K562 (cell line): ENCODE measurements at regions of chr6 and their contacts with region 1.

Region 1: GRCh38 chr6:14734416-14735340 is 511.2 kb upstream of the JARID2 start:
- DNase-seq: peak; percentile 70 to 95 (median 78)
- ATAC-seq: peak; percentile 90
- H3K4me3 ChIP-seq: no peak overlapping the region
- H3K27ac ChIP-seq: peak overlapping the region; percentile 93
- H3K4me1 ChIP-seq: peaks cover 6 to 64% of the 10 kb centered on the region in 2 experiments; a peak in 4 of 5 replicates
- H3K27me3 ChIP-seq: no peaks in the 10 kb centered on the region
- CTCF ChIP-seq: no peak
- EP300 ChIP-seq: peak; percentile 99
- POLR2A ChIP-seq: no peak
- RAD21 ChIP-seq: peak; percentile 42 to 48

Region 2: GRCh38 chr6:14799928-14800327 is 65.2 kb after region 1 on chr6:
- CTCF ChIA-PET with region 1: no interaction called
- POLR2A ChIA-PET with region 1: no interaction called
- in situ Hi-C with region 1: no loop called
- intact Hi-C with region 1: loop called (anchors 5 kb)
- DNase-seq: peak; percentile 79 to 85 (median 82)
- ATAC-seq: peak; percentile 97
- H3K4me3 ChIP-seq: no peak overlapping the region
- H3K27ac ChIP-seq: no peak overlapping the region
- H3K4me1 ChIP-seq: peaks cover 6 to 27% of the 10 kb centered on the region in 2 experiments
- H3K27me3 ChIP-seq: no peaks in the 10 kb centered on the region
- CTCF ChIP-seq: no peak
- EP300 ChIP-seq: no peak
- POLR2A ChIP-seq: no peak
- RAD21 ChIP-seq: no peak